ENCODE measurements at regions of chr10 and their contacts with region 1.

Region 1: GRCh38 chr10:31383810-31384588 is 65.0 kb downstream of the ZEB1 start:
- DNase-seq: no peak
- ATAC-seq: peak in 1 of 8 donors; percentile 51
- H3K4me3 ChIP-seq: no peak overlapping the region
- H3K27ac ChIP-seq: no peak overlapping the region
- H3K4me1 ChIP-seq: peaks cover 0 to 45% (median 6%) of the 10 kb centered on the region in 9 donors
- H3K27me3 ChIP-seq: no peaks in the 10 kb centered on the region
- CTCF ChIP-seq: no peak

Region 2: GRCh38 chr10:31146491-31147209 is 237.3 kb before region 1 on chr10:
- intact Hi-C with region 1: no loop called
- DNase-seq: peak; percentile 60 to 84
- ATAC-seq: peak; percentile 72 to 94 (median 87)
- H3K4me3 ChIP-seq: peak overlapping the region in 3 of 10 donors; percentile 13 to 22 (median 21)
- H3K27ac ChIP-seq: peak overlapping the region in 9 of 10 donors; percentile 46 to 86 (median 63)
- H3K4me1 ChIP-seq: peaks cover 6 to 45% (median 23%) of the 10 kb centered on the region in 9 donors
- H3K27me3 ChIP-seq: no peaks in the 10 kb centered on the region
- CTCF ChIP-seq: no peak

Region 3: GRCh38 chr10:31426401-31426800 is 42.4 kb after region 1 on chr10:
- intact Hi-C with region 1: no loop called
- DNase-seq: peak in 1 of 2 donors; percentile 62
- ATAC-seq: peak; percentile 67 to 94 (median 88)
- H3K4me3 ChIP-seq: no peak overlapping the region
- H3K27ac ChIP-seq: peak overlapping the region; percentile 39 to 75 (median 58)
- H3K4me1 ChIP-seq: peaks cover 5 to 61% (median 51%) of the 10 kb centered on the region in 9 donors
- H3K27me3 ChIP-seq: no peaks in the 10 kb centered on the region
- CTCF ChIP-seq: no peak

Region 4: GRCh38 chr10:31456468-31456867 is 72.5 kb after region 1 on chr10:
- intact Hi-C with region 1: loop called in 1 of 10 experiments (anchors 10 kb)
- DNase-seq: no peak
- ATAC-seq: peak in 2 of 8 donors; percentile 34 to 62
- H3K4me3 ChIP-seq: no peak overlapping the region
- H3K27ac ChIP-seq: peak overlapping the region in 1 of 10 donors; percentile 8
- H3K4me1 ChIP-seq: peaks cover 3 to 58% (median 10%) of the 10 kb centered on the region in 9 donors
- H3K27me3 ChIP-seq: no peaks in the 10 kb centered on the region
- CTCF ChIP-seq: no peak

Region 5: DNA sequence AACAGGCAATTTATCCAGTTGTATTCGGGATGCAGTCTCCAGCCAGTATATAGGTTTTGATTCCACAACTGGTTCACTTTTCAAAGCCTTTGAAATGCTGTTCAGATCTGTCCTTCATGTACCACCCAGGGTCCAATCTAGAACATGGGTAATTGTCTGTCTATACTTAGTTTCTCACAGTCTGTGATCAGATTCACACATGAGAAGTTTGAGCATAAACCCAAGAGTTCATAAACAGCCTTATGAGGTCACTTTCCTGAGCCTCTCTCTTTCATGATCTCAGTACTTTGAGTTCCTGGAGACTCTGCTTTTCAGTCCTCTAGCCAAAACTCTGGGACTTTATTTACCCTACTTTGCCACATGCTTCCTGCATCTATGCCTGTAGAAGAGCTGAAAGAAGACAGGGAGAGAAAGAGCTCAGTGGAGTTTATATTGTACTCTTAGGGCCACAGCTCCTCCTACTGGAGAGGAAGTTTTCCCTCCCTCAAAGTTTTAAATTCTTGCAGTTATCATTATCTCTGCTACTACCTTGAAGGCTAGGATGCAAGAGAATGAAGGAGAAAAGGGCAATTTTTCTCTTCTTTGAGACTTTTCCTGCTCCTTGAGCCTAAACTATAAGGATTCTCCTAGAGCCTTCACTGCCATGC is 107.0 kb after region 1 on chr10:
- intact Hi-C with region 1: no loop called
- DNase-seq: peak in 1 of 2 donors; percentile 23
- ATAC-seq: peak in 6 of 8 donors; percentile 41 to 65 (median 51)
- H3K4me3 ChIP-seq: no peak overlapping the region
- H3K27ac ChIP-seq: no peak overlapping the region
- H3K4me1 ChIP-seq: no peaks in the 10 kb centered on the region
- H3K27me3 ChIP-seq: no peaks in the 10 kb centered on the region
- CTCF ChIP-seq: peak; percentile 27 to 68 (median 60)